Common myeloid progenitor, CD34-positive (primary cell): ENCODE measurements at regions of chr2 and their contacts with region 1.

Region 1: DNA sequence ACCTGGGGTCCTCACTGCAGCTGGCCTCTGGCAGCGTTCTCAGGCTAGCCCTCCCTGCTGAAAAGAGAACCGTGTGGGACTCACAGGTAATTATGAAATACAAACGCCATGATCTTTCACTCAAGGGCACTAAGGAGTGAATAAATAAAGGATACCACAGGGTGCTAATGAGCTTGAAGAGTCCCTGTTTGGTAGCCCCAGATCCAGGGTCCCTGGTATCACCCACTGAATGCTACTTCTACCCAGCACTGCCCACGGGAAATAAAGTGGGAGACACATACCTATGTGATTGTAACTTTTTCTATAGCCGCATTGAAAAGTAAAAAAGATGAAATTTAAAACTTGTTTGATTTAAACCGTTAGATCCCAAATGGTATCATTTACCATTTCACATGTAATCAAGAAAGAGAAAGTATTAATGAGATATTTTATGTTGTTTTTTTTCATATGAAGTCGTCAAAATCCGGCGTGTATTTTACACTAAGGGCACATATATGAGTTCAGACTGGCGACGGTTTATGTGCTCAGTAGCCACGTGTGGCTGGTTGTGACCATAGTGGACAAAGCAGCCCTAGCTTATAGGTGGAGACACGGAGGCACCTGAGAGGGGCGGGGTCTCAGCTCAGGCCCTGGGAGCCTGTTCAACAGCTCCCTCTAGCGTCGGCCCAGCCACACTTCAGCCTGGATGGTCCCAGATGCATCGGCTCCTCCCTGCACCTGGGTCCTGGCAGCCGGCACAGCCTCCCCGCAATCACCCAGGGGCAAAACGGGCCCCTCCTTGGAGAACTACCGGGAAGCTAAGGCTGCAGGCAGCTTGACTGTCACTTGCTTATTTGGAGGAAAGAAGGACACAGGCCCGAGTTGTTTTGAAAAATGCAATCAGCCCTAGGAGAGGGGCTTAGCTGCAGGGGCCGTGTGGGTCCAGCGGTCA is 39.2 kb downstream of the ODC1 start:
- DNase-seq: peak; percentile 80 to 82 (median 81)
- H3K4me3 ChIP-seq: peak overlapping the region in 5 of 7 experiments; percentile 12 to 61 (median 30)
- H3K27ac ChIP-seq: peak overlapping the region in 1 of 2 experiments; percentile 47
- H3K4me1 ChIP-seq: peaks cover 14 to 63% (median 55%) of the 10 kb centered on the region in 4 experiments
- H3K27me3 ChIP-seq: no peaks in the 10 kb centered on the region

Region 2: GRCh38 chr2:10162586-10163497 is 246.1 kb before region 1 on chr2:
- CTCF ChIA-PET with region 1: interaction called, 14 read pairs
- POLR2A ChIA-PET with region 1: no interaction called
- DNase-seq: peak in 1 of 3 donors; percentile 8
- H3K4me3 ChIP-seq: no peak overlapping the region
- H3K27ac ChIP-seq: no peak overlapping the region
- H3K4me1 ChIP-seq: peaks cover 0 to 8% (median 4%) of the 10 kb centered on the region in 4 experiments
- H3K27me3 ChIP-seq: no peaks in the 10 kb centered on the region

Region 3: GRCh38 chr2:10302479-10303180 is 106.3 kb before region 1 on chr2 and contains the start of gene HPCAL1:
- CTCF ChIA-PET with region 1: interaction called, 76 read pairs
- POLR2A ChIA-PET with region 1: interaction called, 4 read pairs
- DNase-seq: peak; percentile 78 to 88 (median 84)
- H3K4me3 ChIP-seq: peak within 1 kb of the TSS; percentile 78 to 96 (median 91)
- H3K27ac ChIP-seq: peak within 1 kb of the TSS in 1 of 2 experiments; percentile 68
- H3K4me1 ChIP-seq: peaks cover 13 to 70% (median 65%) of the 10 kb centered on the region in 4 experiments
- H3K27me3 ChIP-seq: no peaks in the 10 kb centered on the region

Region 4: GRCh38 chr2:10346929-10347561 is 61.9 kb before region 1 on chr2:
- CTCF ChIA-PET with region 1: interaction called, 10 read pairs
- POLR2A ChIA-PET with region 1: no interaction called
- DNase-seq: no peak
- H3K4me3 ChIP-seq: no peak overlapping the region
- H3K27ac ChIP-seq: no peak overlapping the region
- H3K4me1 ChIP-seq: peaks cover 4 to 55% (median 33%) of the 10 kb centered on the region in 4 experiments
- H3K27me3 ChIP-seq: no peaks in the 10 kb centered on the region

Region 5: GRCh38 chr2:10382354-10383061 is 26.4 kb before region 1 on chr2:
- CTCF ChIA-PET with region 1: interaction called, 46 read pairs
- POLR2A ChIA-PET with region 1: interaction called, 5 read pairs
- DNase-seq: peak; percentile 65 to 91 (median 83)
- H3K4me3 ChIP-seq: peak overlapping the region in 6 of 7 experiments; percentile 8 to 60 (median 34)
- H3K27ac ChIP-seq: no peak overlapping the region
- H3K4me1 ChIP-seq: peaks cover 21 to 95% (median 87%) of the 10 kb centered on the region in 4 experiments
- H3K27me3 ChIP-seq: no peaks in the 10 kb centered on the region

Region 6: DNA sequence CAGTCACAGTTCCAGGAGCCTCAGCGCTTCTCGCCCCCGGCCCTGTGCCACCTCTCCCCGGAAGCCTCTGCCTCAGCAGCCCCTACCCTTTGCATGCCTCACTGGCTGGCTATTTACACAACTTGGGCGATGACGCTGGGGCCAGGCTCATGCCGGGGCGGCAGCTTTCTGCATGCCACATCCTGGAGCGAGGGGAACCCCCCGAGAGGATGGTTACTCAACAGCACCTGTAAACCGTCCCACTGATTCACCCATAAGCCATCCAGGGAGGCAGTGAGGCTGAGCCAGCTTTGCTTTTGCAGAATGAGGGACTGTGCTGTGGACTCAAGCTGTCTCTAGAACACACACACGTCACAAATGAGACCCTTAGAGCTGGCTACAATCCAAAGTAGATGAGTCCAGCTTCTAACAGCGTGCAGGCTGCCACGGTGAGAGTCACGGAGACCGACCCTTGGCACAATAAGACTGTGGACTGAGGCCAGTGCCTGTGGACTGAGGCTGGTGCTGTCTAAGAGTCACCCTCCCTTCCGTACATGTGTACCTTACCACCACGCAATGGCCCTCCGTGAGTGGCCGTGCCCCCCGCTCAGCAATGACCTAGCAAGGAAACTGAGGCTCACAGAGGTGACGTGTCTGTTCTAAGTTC is 84.8 kb after region 1 on chr2:
- CTCF ChIA-PET with region 1: no interaction called
- POLR2A ChIA-PET with region 1: no interaction called
- DNase-seq: peak; percentile 3 to 29 (median 12)
- H3K4me3 ChIP-seq: no peak overlapping the region
- H3K27ac ChIP-seq: no peak overlapping the region
- H3K4me1 ChIP-seq: no peaks in the 10 kb centered on the region
- H3K27me3 ChIP-seq: peaks cover 0 to 41% (median 4%) of the 10 kb centered on the region in 5 experiments